ENCODE measurements at regions of chr7 and their contacts with region 1.

Region 1: GRCh38 chr7:105652359-105652993 is 71.2 kb upstream of the EFCAB10 start:
- DNase-seq: peak; percentile 78 to 86 (median 84)
- H3K4me3 ChIP-seq: no peak overlapping the region
- H3K27ac ChIP-seq: no peak overlapping the region
- H3K27me3 ChIP-seq: no peaks in the 10 kb centered on the region
- CTCF ChIP-seq: peak; percentile 51 to 96 (median 86)

Region 2: GRCh38 chr7:105723572-105723971 is 71.1 kb after region 1 on chr7:
- intact Hi-C with region 1: loop called in 1 of 2 experiments (anchors 5 kb)
- DNase-seq: peak in 7 of 10 donors; percentile 18 to 67 (median 45)
- H3K4me3 ChIP-seq: peak overlapping the region in 1 of 59 donors; percentile 27
- H3K27ac ChIP-seq: peak overlapping the region in 21 of 59 donors; percentile 1 to 85 (median 51)
- H3K27me3 ChIP-seq: no peaks in the 10 kb centered on the region
- CTCF ChIP-seq: peak in 6 of 56 donors; percentile 10 to 39 (median 28)

Region 3: DNA sequence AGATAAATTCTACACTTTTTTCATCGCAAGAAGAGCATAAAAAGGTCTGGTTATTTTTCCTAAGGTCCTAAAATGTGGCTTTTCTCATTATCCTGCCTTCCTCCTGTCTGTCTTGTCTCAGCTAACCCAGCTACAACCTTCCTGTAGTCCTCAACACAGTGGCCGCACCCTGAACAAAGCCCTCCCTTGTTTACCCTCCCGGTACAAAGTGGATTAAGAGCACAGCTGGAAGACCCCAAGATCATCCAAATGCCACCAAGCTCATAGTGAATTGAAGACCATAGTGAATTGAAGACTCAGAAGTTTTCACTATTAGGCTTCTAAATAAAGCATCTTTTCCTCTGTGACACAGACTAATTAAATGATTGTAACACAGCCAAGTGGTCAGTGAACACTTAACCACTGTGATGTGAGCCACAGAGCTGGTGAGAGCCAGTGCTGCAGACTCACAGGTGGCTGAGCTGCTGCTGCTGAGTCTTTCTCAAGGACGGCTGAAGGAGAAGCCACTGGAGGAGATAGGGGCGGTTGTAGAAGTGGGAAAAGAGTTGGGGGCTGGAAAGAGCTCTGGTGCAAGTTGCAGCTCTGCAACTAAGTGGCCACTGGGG is 100.3 kb after region 1 on chr7:
- intact Hi-C with region 1: loop called (anchors 5 to 10 kb)
- DNase-seq: no peak
- H3K4me3 ChIP-seq: no peak overlapping the region
- H3K27ac ChIP-seq: no peak overlapping the region
- H3K27me3 ChIP-seq: no peaks in the 10 kb centered on the region
- CTCF ChIP-seq: no peak

Region 4: GRCh38 chr7:105759670-105760550 is 107.4 kb after region 1 on chr7:
- intact Hi-C with region 1: loop called in 1 of 2 experiments (anchors 10 kb)
- DNase-seq: peak in 6 of 10 donors; percentile 32 to 71 (median 49)
- H3K4me3 ChIP-seq: no peak overlapping the region
- H3K27ac ChIP-seq: no peak overlapping the region
- H3K27me3 ChIP-seq: no peaks in the 10 kb centered on the region
- CTCF ChIP-seq: peak in 55 of 56 donors; percentile 41 to 83 (median 66)

Region 5: DNA sequence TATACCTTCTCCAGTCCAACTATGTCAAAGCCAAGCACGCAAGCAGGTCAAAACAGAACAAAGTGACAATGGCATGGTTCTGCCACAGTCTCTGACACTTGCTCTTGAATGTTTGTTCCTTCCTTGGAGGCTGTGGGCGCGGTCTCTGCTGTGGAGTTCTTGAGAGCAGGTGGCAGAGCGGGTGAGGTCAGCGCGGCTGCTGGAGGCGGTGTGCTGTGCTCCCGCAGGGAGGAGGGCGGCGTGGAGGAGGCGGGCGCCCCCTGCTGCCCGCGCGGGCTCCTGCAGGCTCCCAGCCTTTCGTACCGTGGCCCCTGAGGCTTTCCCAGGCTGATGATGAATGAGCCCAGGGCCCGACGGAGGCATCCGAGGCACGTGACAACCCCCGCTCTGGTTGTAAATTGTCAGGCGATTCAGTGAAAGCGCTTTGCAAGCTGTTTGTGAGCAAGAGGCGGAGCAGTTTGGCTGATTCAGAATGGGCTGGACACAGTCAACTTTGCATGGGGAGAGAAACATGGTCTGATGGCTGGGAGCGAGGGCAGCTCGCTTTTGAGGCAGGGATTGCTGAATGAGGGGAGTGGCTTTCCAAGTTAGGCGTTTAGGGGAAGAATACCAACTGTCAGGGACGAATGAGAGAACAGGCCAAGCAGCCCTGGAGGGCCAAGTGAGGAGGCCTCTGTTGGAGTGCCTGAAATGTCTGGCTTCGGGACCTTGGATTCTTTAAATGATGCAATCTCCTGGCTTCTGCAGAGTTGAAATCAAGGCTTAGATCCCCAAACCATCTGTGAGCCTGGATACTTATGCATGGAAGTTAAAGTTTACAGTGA is 357.1 kb after region 1 on chr7:
- intact Hi-C with region 1: loop called in 1 of 2 experiments (anchors 1 kb)
- DNase-seq: peak; percentile 72 to 89 (median 82)
- H3K4me3 ChIP-seq: peak overlapping the region in 37 of 59 donors; percentile 1 to 52 (median 29)
- H3K27ac ChIP-seq: peak overlapping the region in 2 of 59 donors; percentile 26 to 34
- H3K27me3 ChIP-seq: no peaks in the 10 kb centered on the region
- CTCF ChIP-seq: peak; percentile 71 to 99 (median 96)

Region 6: GRCh38 chr7:106041140-106041717 is 388.8 kb after region 1 on chr7:
- intact Hi-C with region 1: loop called (anchors 2 kb)
- DNase-seq: peak in 2 of 10 donors; percentile 53
- H3K4me3 ChIP-seq: no peak overlapping the region
- H3K27ac ChIP-seq: no peak overlapping the region
- H3K27me3 ChIP-seq: peaks cover 0 to 3% (median 0%) of the 10 kb centered on the region in 45 donors
- CTCF ChIP-seq: peak; percentile 17 to 78 (median 64)

Region 7: DNA sequence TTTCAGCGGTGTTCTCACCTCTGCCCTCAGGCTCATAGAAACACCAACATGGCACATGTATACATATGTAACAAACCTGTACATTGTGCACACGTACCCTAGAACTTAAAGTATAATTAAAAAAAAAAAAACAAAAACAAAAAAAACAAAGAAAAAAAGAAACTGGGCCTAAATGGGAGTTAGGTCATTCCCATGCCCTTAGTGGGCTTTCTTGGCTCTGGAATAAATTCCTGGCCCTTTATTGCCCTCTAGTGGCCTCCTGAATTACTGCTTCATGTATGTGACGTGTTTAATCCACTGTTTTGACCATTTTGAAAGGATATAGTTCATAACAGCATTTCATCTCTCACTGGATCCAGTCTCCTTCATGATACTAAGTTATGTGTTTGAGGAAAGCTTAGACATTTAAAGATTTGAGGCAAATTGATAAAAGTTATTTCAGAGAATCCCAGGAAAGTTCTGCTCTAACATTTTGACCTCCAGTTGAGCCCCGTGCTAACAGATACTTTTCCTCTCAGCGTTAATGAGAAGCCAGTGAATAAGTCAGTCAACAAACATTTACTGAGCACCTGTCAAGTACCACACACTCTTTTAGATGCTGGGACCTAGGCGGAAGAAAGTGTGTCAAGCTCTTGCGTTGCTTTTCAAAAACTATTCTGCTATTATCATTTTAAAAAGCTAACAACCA is 514.3 kb after region 1 on chr7:
- intact Hi-C with region 1: loop called in 1 of 2 experiments (anchors 10 kb)
- DNase-seq: peak in 2 of 10 donors; percentile 53 to 57
- H3K4me3 ChIP-seq: no peak overlapping the region
- H3K27ac ChIP-seq: peak overlapping the region in 6 of 59 donors; percentile 24 to 62 (median 32)
- H3K27me3 ChIP-seq: no peaks in the 10 kb centered on the region
- CTCF ChIP-seq: peak; percentile 59 to 91 (median 81)

Region 8: GRCh38 chr7:106824458-106824857 is 1172.0 kb after region 1 on chr7:
- intact Hi-C with region 1: no loop called
- DNase-seq: no peak
- H3K4me3 ChIP-seq: no peak overlapping the region
- H3K27ac ChIP-seq: no peak overlapping the region
- H3K27me3 ChIP-seq: no peaks in the 10 kb centered on the region
- CTCF ChIP-seq: no peak